MCF 10A (cell line): ENCODE measurements at regions of chr14 and their contacts with region 1.

Region 1: DNA sequence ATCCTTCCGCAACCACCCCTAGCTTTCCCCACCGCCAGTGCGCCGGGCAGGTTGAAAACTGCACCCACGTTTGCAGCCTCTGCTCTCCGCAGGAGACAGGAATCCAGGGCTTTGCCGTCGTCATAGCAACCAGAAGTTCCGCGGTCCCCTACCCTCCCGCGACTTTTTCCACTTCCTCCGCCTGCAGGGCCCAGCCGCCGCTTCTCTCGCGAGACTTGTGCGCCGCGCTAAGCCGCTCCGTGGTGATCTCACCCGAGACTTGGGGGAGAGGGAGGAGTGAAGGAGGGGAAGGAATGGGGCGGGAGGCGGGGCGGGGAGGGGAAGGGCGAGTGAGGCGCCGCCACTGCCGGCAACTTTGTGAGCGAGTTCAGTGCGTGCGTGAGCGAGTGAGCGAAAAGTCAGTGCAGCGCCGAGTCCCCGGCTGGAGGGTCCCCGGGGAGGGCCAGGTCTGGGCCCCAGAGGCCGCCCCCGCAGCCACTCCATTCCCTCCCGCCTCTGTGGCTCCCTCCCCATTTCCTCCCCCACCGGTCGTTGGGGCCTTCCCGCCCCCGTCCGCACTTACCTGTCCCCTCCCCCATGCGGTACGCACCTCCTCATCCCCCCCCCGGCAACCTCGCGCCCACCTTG is 413.0 kb downstream of the PCNX1 start:
- DNase-seq: peak; percentile 98
- H3K4me3 Mint-ChIP-seq: peak within 1 kb of the TSS; percentile 87
- H3K27ac Mint-ChIP-seq: peak within 1 kb of the TSS; percentile 94
- H3K4me1 Mint-ChIP-seq: peaks cover 32% of the 10 kb centered on the region
- H3K27me3 Mint-ChIP-seq: no peaks in the 10 kb centered on the region
- CTCF ChIP-seq: no peak

Region 2: GRCh38 chr14:71103662-71104484 is 216.3 kb before region 1 on chr14:
- CTCF ChIA-PET with region 1: interaction called, 5 read pairs
- POLR2A ChIA-PET with region 1: no interaction called
- intact Hi-C with region 1: loop called (anchors 1 kb)
- DNase-seq: peak; percentile 72
- H3K4me3 Mint-ChIP-seq: no peak overlapping the region
- H3K27ac Mint-ChIP-seq: no peak overlapping the region
- H3K4me1 Mint-ChIP-seq: peaks cover 4% of the 10 kb centered on the region
- H3K27me3 Mint-ChIP-seq: no peaks in the 10 kb centered on the region
- CTCF ChIP-seq: peak; percentile 66

Region 3: GRCh38 chr14:71166180-71166790 is 153.9 kb before region 1 on chr14:
- CTCF ChIA-PET with region 1: interaction called, 15 read pairs
- POLR2A ChIA-PET with region 1: interaction called, 8 read pairs
- intact Hi-C with region 1: loop called (anchors 1 kb)
- DNase-seq: peak; percentile 76
- H3K4me3 Mint-ChIP-seq: no peak overlapping the region
- H3K27ac Mint-ChIP-seq: no peak overlapping the region
- H3K4me1 Mint-ChIP-seq: peaks cover 12% of the 10 kb centered on the region
- H3K27me3 Mint-ChIP-seq: no peaks in the 10 kb centered on the region
- CTCF ChIP-seq: peak; percentile 38

Region 4: GRCh38 chr14:71362920-71363584 is 42.8 kb after region 1 on chr14:
- CTCF ChIA-PET with region 1: interaction called, 4 read pairs
- POLR2A ChIA-PET with region 1: interaction called, 13 read pairs
- intact Hi-C with region 1: no loop called
- DNase-seq: peak; percentile 29
- H3K4me3 Mint-ChIP-seq: peak overlapping the region; percentile 23
- H3K27ac Mint-ChIP-seq: peak overlapping the region; percentile 80
- H3K4me1 Mint-ChIP-seq: peaks cover 31% of the 10 kb centered on the region
- H3K27me3 Mint-ChIP-seq: no peaks in the 10 kb centered on the region
- CTCF ChIP-seq: no peak

Region 5: DNA sequence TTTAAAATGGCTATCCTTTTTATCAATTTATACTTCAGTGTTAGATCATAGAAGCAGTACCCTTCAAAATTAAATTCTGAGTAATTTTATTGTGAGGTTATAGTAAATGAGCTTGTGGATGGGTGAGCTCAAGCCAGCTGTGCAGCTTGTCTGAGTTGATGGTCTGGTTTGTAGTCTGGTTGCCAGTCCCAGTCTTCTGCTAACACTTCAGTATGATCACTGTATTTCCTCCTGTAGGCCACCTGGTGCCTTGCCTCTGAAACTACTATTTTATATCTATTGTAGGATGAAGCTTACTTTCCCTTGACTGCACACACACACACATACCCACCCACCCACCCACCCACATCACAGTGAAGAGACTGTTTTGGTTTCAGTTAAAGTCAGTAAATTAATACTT is 83.4 kb after region 1 on chr14:
- CTCF ChIA-PET with region 1: interaction called, 37 read pairs
- POLR2A ChIA-PET with region 1: interaction called, 34 read pairs
- intact Hi-C with region 1: loop called (anchors 1 kb)
- DNase-seq: peak; percentile 42
- H3K4me3 Mint-ChIP-seq: no peak overlapping the region
- H3K27ac Mint-ChIP-seq: no peak overlapping the region
- H3K4me1 Mint-ChIP-seq: no peaks in the 10 kb centered on the region
- H3K27me3 Mint-ChIP-seq: no peaks in the 10 kb centered on the region
- CTCF ChIP-seq: peak; percentile 18

Region 6: GRCh38 chr14:71665157-71665556 is 344.9 kb after region 1 on chr14:
- CTCF ChIA-PET with region 1: no interaction called
- POLR2A ChIA-PET with region 1: no interaction called
- intact Hi-C with region 1: loop called (anchors 5 kb)
- DNase-seq: peak; percentile 44
- H3K4me3 Mint-ChIP-seq: no peak overlapping the region
- H3K27ac Mint-ChIP-seq: no peak overlapping the region
- H3K4me1 Mint-ChIP-seq: peaks cover 11% of the 10 kb centered on the region
- H3K27me3 Mint-ChIP-seq: no peaks in the 10 kb centered on the region
- CTCF ChIP-seq: no peak

Region 7: DNA sequence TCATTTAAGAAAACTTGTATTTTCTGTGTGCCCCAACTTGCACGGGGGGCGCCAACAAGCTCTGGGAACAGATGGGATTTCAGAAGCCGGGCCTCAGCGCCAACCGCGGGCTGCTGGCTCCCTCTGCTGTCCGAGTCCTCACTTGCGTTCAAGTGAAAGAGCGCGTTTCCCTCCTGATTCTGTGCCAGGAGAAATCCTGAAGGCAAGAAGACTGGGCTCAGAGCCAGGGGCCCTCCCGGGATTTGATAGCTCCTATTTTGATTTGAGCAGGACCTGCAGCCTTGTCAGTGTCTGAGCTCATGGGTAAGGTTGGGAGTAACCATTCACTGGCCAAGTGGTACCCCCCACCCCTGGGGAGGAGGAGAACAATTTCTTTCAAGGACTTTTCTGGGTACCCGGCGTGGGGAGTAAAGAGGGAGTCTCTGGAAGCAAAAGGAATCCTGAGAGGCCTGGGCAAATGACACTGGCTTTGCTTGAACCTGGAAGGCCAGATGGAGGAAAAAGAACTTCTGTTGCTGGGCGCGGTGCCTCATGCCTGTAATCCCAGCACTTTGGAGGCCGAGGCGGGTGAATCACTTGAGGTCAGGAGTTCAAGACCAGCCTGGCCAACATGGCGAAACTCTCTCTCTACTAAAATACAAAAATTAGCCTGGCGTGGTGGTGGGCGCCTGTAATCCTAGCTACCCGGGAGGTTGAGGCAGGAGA is 433.1 kb after region 1 on chr14:
- CTCF ChIA-PET with region 1: interaction called, 25 read pairs
- POLR2A ChIA-PET with region 1: interaction called, 21 read pairs
- intact Hi-C with region 1: loop called (anchors 1 kb)
- DNase-seq: peak; percentile 96
- H3K4me3 Mint-ChIP-seq: no peak overlapping the region
- H3K27ac Mint-ChIP-seq: no peak overlapping the region
- H3K4me1 Mint-ChIP-seq: no peaks in the 10 kb centered on the region
- H3K27me3 Mint-ChIP-seq: no peaks in the 10 kb centered on the region
- CTCF ChIP-seq: peak; percentile 92